ENCODE measurements at regions of chr16 and their contacts with region 1.

Region 1: GRCh38 chr16:67480833-67481560 is at the start of gene ATP6V0D1:
- DNase-seq: peak; percentile 99
- H3K4me3 Mint-ChIP-seq: peak within 1 kb of the TSS; percentile 100
- H3K27ac Mint-ChIP-seq: peak within 1 kb of the TSS; percentile 99
- H3K4me1 Mint-ChIP-seq: peaks cover 42% of the 10 kb centered on the region
- H3K27me3 Mint-ChIP-seq: no peaks in the 10 kb centered on the region
- total RNA-seq, gene ATP6V0D1: 11.9 to 15.3 TPM

Region 2: DNA sequence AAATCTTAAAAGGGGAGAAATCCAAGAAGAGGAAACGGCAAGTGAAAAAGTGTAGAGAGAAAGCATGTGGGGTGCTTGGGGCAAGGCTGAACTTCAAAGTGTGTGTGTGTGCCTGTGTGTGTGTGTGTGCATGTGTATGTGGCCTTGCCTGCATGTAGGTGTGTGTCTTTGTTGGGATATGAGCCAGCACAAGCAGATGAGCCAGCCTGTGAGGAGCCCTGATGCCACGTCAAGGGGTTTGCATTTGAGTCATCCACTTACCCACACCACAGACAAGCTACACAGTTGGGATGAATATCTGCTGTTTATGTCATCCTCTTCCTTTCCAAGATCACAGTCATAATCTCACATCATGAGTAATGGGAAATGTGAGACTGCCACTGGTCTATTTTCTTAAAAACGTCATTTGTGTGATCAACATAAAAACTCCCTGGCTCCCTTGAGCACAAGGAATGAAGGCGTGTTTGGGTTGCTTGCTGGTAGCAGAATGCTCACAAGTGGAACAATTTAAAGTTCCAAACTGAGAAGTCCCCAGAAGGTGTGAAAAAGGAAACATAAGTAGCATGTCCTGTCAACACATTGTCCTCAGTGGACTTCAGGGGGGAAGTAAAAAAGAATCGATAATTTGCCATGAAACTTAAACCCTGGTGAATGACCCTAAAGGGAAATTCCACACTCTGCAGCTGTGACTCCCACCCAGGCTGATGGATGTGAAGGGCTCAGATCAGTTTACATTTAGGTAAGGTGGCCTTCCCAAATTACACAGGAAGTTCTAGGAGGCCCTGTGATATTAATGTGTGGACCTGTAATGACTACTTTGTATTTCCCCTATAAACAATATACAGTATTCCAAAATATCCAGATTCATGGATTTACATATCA is 169.1 kb before region 1 on chr16:
- CTCF ChIA-PET with region 1: no interaction called
- intact Hi-C with region 1: loop called (anchors 1 kb)
- DNase-seq: peak; percentile 98
- H3K4me3 Mint-ChIP-seq: peak overlapping the region; percentile 13
- H3K27ac Mint-ChIP-seq: peak overlapping the region; percentile 96
- H3K4me1 Mint-ChIP-seq: peaks cover 44% of the 10 kb centered on the region
- H3K27me3 Mint-ChIP-seq: no peaks in the 10 kb centered on the region

Region 3: DNA sequence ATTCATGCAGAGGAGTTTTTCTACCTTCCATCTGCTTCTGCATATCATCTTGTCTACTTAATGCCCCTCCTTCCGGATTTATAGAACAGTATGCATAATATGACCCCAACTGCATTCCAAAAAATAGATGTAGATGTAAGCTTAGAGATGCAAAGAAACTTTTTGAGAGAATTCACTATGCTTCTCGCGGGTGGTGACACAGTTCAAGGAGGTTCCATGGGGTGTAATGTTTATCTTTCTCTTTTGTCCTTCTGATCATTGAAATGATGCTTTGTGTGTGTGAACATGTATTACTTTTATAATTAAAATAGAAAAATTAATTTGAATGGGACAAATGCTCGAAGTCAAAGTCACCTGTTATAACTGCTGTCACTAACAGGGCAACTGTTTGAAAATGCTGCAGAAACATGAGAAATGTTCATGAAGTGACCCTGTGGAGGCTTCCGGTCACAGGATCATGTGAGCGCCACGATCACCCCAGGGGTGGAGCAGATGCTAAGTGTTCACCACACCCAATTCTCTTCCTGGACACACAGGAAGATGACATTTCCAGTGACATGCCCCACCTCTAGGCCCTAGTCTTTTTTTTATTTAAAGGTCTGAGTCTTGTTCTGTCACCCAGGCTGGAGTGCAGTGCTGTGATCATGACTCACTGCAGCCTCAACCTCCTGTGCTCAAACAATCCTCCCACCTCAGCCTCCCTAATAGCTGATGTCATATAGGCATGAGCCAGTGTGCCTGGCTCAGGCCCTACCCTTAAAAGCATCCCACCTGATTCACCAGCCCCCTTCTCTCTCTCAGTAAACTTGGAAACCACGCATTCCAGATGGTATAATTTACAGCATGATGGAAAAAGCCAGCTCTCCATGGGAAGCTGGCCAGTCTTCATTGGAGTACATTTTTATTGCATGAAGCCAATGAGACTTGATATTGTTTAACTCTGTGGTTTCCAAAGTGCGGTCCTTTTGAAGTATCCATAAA is 23.3 kb after region 1 on chr16:
- CTCF ChIA-PET with region 1: interaction called, 6 read pairs
- intact Hi-C with region 1: loop called (anchors 1 kb)
- DNase-seq: peak; percentile 75
- H3K4me3 Mint-ChIP-seq: no peak overlapping the region
- H3K27ac Mint-ChIP-seq: peak overlapping the region; percentile 64
- H3K4me1 Mint-ChIP-seq: peaks cover 49% of the 10 kb centered on the region
- H3K27me3 Mint-ChIP-seq: no peaks in the 10 kb centered on the region

Region 4: GRCh38 chr16:67537270-67537635 is 56.3 kb after region 1 on chr16:
- CTCF ChIA-PET with region 1: interaction called, 3 read pairs
- intact Hi-C with region 1: loop called (anchors 1 kb)
- DNase-seq: peak; percentile 71
- H3K4me3 Mint-ChIP-seq: peak overlapping the region; percentile 79
- H3K27ac Mint-ChIP-seq: peak overlapping the region; percentile 75
- H3K4me1 Mint-ChIP-seq: peaks cover 21% of the 10 kb centered on the region
- H3K27me3 Mint-ChIP-seq: peaks cover 2% of the 10 kb centered on the region

Region 5: DNA sequence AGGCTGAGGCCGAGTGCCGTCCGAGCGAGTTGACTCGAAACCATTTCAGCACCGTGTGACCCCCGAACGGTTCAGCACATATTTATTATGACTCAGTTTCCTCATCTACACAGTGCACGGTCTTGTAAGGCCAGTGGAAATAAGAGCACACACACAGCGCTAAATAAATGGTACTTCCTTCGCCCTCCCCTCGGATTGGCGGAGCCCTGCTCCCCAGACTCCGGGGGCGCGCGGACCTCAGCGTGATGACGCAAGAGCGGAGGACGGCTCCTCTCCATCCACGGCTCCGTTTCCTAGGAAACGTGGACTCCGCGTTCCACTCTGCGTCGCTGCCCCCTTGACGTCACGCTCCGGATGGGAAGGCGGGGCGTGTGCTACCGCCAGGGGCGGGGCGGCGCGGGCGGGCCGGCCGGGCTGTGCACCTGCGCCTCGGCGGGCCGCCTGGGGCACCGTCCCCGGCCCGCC is 179.6 kb after region 1 on chr16 and contains the start of gene PARD6A:
- CTCF ChIA-PET with region 1: no interaction called
- intact Hi-C with region 1: loop called (anchors 1 kb)
- DNase-seq: peak; percentile 97
- H3K4me3 Mint-ChIP-seq: peak within 1 kb of the TSS; percentile 90
- H3K27ac Mint-ChIP-seq: peak within 1 kb of the TSS; percentile 92
- H3K4me1 Mint-ChIP-seq: peaks cover 21% of the 10 kb centered on the region
- H3K27me3 Mint-ChIP-seq: no peaks in the 10 kb centered on the region
- total RNA-seq, gene PARD6A: 7.3 to 8.4 TPM

Region 6: GRCh38 chr16:67968400-67969253 is 487.6 kb after region 1 on chr16 and contains the start of gene SLC12A4:
- CTCF ChIA-PET with region 1: no interaction called
- intact Hi-C with region 1: loop called (anchors 1 kb)
- DNase-seq: peak; percentile 93
- H3K4me3 Mint-ChIP-seq: peak within 1 kb of the TSS; percentile 97
- H3K27ac Mint-ChIP-seq: peak within 1 kb of the TSS; percentile 78
- H3K4me1 Mint-ChIP-seq: peaks cover 10% of the 10 kb centered on the region
- H3K27me3 Mint-ChIP-seq: no peaks in the 10 kb centered on the region
- total RNA-seq, gene SLC12A4: 24.3 to 28.9 TPM